MCF 10A (cell line): ENCODE measurements at regions of chr6 and their contacts with region 1.

Region 1: GRCh38 chr6:70107852-70108629 is 194.8 kb downstream of the COL9A1 start:
- DNase-seq: peak; percentile 33
- H3K4me3 Mint-ChIP-seq: no peak overlapping the region
- H3K27ac Mint-ChIP-seq: no peak overlapping the region
- H3K4me1 Mint-ChIP-seq: no peaks in the 10 kb centered on the region
- H3K27me3 Mint-ChIP-seq: peaks cover 96% of the 10 kb centered on the region
- CTCF ChIP-seq: peak; percentile 64

Region 2: DNA sequence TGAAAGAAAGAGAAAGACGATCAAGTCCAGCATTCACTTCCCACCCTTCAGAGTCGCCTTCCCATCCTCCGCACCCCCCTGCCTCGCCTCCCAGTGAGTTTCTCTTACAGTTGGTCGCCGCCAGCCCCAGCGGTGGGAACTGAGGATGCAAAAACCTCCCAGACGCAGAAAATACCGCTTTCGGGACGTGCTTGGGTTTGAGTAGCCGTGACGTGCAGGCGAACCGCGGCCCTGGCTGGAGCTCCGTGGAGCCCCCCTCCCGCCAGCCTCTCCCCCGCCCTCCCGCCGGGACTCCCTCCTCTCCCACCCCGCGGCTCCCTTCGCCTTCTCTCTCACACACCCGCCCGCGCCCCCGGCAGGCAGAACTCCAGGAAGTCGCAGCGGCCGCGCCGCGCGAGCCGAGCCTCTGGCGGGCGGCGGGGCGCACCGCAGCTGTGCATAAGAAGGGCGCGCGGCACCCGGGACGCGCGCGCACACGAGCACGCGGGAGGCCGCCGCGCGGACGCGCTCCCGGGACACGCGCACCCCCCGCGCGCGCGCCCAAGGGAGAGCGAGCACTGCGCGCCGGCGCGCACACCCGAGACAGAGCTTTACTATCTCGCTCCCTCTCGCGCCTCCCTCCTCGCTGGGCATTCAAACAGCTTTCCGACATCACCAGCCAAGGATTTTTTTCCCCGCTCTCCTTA is 1473.2 kb before region 1 on chr6 and contains the start of gene ADGRB3:
- CTCF ChIA-PET with region 1: interaction called, 5 read pairs
- POLR2A ChIA-PET with region 1: no interaction called
- intact Hi-C with region 1: loop called (anchors 5 kb)
- DNase-seq: no peak
- H3K4me3 Mint-ChIP-seq: peak within 1 kb of the TSS; percentile 69
- H3K27ac Mint-ChIP-seq: no peak within 1 kb of the TSS
- H3K4me1 Mint-ChIP-seq: peaks cover 6% of the 10 kb centered on the region
- H3K27me3 Mint-ChIP-seq: peaks cover 95% of the 10 kb centered on the region
- CTCF ChIP-seq: no peak
- total RNA-seq, gene ADGRB3: not detected in 2 replicates

Region 3: DNA sequence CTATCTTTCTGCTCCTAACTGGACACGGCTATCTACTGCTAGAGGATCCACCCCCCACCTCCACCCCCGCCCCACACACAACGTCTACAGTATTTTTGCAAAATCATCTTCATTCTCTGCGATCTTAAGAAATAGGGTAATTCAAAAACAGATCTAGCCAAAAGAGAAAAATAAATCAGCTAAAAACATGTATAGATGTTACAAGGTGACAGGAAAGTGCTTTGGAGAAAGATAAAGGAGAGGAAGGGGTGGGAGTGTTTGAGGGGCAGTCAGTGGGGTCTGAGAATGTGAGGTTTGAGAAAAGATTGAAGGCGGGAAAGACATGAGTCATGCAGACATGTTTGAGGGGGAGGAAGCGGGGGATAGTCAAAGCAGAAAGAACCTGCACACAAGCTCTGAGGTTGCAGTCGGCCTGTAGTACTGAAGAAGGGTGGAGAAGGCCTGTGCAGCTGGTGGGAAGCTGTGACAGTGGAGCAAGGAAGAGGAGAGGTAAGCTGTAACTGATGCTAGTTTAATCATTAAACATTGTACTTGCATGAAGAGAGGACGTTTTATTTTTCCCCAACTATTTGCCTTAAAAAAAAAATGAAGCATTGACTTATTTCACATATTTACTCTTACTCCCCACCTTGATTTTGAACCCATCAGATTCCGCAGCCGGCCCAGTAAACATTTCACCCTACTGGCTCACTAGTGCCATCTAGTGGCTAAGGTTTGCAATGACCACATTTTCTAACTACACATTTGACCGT is 1140.3 kb before region 1 on chr6:
- CTCF ChIA-PET with region 1: no interaction called
- POLR2A ChIA-PET with region 1: no interaction called
- intact Hi-C with region 1: loop called (anchors 10 kb)
- DNase-seq: peak; percentile 75
- H3K4me3 Mint-ChIP-seq: no peak overlapping the region
- H3K27ac Mint-ChIP-seq: no peak overlapping the region
- H3K4me1 Mint-ChIP-seq: peaks cover 4% of the 10 kb centered on the region
- H3K27me3 Mint-ChIP-seq: peaks cover 87% of the 10 kb centered on the region
- CTCF ChIP-seq: peak; percentile 90

Region 4: GRCh38 chr6:69768664-69769063 is 339.4 kb before region 1 on chr6:
- CTCF ChIA-PET with region 1: interaction called, 11 read pairs
- POLR2A ChIA-PET with region 1: no interaction called
- intact Hi-C with region 1: no loop called
- DNase-seq: no peak
- H3K4me3 Mint-ChIP-seq: no peak overlapping the region
- H3K27ac Mint-ChIP-seq: no peak overlapping the region
- H3K4me1 Mint-ChIP-seq: no peaks in the 10 kb centered on the region
- H3K27me3 Mint-ChIP-seq: no peaks in the 10 kb centered on the region
- CTCF ChIP-seq: no peak

Region 5: GRCh38 chr6:70124882-70125545 is 17.0 kb after region 1 on chr6:
- CTCF ChIA-PET with region 1: interaction called, 12 read pairs
- POLR2A ChIA-PET with region 1: no interaction called
- intact Hi-C with region 1: no loop called
- DNase-seq: peak; percentile 25
- H3K4me3 Mint-ChIP-seq: no peak overlapping the region
- H3K27ac Mint-ChIP-seq: no peak overlapping the region
- H3K4me1 Mint-ChIP-seq: no peaks in the 10 kb centered on the region
- H3K27me3 Mint-ChIP-seq: peaks cover 14% of the 10 kb centered on the region
- CTCF ChIP-seq: no peak